ENCODE measurements at regions of chr1 and their contacts with region 1.

Region 1: GRCh38 chr1:52153010-52153409 is 11.1 kb downstream of the ZFYVE9 start:
- DNase-seq: no peak
- CTCF ChIP-seq: no peak

Region 2: GRCh38 chr1:52141513-52142219 is 11.3 kb before region 1 on chr1 and contains the start of gene ZFYVE9:
- CTCF ChIA-PET with region 1: interaction called, 10 read pairs
- POLR2A ChIA-PET with region 1: no interaction called
- DNase-seq: peak; percentile 85
- CTCF ChIP-seq: peak; percentile 93